SK-N-SH (cell line): ENCODE measurements at regions of chr18 and their contacts with region 1.

Region 1: DNA sequence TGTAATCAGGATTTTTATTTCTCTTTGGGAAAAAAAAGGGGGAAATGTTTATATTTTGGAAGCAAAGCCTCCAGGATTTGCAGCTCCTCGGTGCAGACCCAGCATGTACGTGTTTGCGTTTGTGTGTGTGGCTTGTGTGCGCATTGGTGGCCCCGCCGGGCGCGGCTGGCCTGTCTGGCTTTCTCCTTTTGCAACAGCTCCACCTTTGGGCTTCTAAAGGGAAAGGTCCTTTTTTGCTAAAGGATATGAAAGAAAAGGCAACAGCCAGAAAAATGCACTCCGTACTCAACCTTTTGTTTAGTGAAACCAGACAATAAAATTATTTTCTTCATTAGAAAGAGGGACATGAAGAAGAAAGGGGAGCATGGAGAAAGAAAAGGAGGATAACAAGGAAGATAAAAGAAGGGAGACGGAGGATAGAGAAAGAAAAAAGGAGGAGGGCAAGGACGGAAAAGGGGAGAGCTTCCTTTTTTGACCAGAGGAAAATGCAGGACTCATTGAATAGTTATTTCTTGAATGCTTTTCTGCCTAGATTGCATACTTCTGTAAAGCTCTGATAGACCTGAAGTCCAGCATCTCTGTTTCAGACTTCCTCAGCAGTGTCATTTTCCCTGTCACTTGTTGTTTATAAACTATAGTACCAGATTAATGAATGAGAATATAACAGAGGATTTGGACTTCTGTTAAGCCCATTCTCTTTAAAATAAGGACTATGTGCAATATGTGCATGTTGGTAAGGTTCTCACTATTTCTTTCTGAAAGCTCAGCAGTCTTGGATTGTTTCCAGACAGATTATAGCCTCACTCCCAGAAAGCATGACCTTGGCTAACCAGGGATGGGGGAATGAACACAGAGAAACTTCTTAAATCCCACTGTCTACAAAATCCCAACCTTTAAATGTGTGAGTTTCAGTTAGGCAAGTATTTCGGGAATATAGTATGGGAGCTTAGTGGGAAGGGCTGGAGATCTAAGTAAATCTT is 563.1 kb upstream of the PIK3C3 start:
- DNase-seq: peak; percentile 72
- H3K4me3 ChIP-seq: peak overlapping the region; percentile 41 to 53; a peak in 3 of 4 replicates
- H3K27ac ChIP-seq: peak overlapping the region in 1 of 2 experiments; percentile 63; a peak in 1 of 4 replicates
- H3K4me1 ChIP-seq: peaks cover 0 to 4% of the 10 kb centered on the region in 2 experiments; a peak in 2 of 4 replicates
- H3K27me3 ChIP-seq: no peaks in the 10 kb centered on the region
- CTCF ChIP-seq: peak; percentile 86
- EP300 ChIP-seq: peak in 1 of 2 experiments; percentile 33; a peak in 1 of 4 replicates
- RAD21 ChIP-seq: peak; percentile 92

Region 2: DNA sequence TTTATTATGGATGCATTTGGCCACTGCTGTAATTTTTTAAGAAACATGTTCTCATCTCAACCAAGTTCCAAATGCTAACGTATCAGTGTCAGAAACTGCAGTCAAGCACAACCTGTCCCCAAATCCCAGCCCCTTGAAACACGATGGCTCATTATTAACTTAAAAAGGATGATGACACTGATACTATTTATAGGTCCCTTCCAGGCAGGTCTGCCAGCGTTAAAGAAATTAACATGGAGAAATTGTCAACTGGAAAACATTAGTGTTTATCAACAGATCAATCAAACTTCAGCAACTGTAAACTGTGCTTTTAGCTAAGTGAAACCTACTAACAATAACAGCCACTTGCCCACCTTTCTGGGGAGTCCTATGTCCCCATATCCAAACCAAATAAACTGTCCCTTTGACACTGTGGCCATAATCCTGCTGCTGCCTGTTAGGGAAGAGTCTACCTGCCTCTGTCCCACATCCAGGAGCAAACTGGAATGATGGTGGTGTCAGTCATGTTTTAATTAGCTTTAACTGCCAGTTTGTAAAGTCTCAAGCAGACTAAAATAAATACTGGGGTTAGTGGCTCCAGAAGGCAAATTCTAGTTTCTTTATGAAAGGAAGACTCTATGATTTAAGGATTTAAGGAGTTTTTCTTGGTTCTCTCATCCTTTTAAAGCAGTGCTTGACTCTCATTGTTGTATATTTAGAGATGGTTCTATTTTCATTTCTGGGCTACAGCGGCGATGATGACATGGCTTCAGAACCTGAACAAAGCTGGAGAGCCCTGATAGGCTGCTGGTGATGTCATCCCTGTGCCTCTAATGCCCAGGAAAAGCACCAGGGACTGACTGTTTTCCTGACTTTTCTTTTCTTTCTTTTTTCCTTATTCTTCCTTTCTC is 20.5 kb before region 1 on chr18:
- CTCF ChIA-PET with region 1: interaction called, 11 read pairs
- POLR2A ChIA-PET with region 1: no interaction called
- DNase-seq: peak; percentile 15
- H3K4me3 ChIP-seq: no peak overlapping the region; a peak in 2 of 4 replicates
- H3K27ac ChIP-seq: peak overlapping the region in 1 of 2 experiments; percentile 98; a peak in 2 of 4 replicates
- H3K4me1 ChIP-seq: peaks cover 0 to 18% of the 10 kb centered on the region in 2 experiments; a peak in 2 of 4 replicates
- H3K27me3 ChIP-seq: no peaks in the 10 kb centered on the region
- CTCF ChIP-seq: no peak
- EP300 ChIP-seq: peak in 1 of 2 experiments; percentile 92; a peak in 2 of 4 replicates
- RAD21 ChIP-seq: no peak; the same call in 1 of the 2 replicates

Region 3: DNA sequence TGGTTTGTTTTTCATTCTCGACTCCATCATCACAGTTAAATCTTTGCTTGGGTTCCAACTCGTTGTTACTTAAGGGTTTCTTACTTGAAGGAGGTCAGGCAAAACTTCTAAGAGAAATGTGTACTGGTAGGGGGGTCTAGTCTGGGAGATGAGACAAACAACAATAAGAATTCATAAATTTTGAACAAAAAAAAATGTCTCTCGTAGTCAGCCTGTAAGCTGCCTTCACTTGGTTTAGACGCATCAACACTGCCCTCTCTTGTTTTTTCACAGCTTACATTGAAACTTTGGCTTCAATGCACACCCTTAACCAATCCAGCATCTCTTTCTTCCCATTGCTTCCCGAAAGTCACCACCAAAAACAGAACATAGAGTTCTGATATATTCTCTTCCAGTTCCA is 13.3 kb before region 1 on chr18:
- CTCF ChIA-PET with region 1: interaction called, 14 read pairs
- POLR2A ChIA-PET with region 1: no interaction called
- DNase-seq: peak; percentile 17
- H3K4me3 ChIP-seq: no peak overlapping the region
- H3K27ac ChIP-seq: no peak overlapping the region
- H3K4me1 ChIP-seq: no peaks in the 10 kb centered on the region; a peak in 1 of 4 replicates
- H3K27me3 ChIP-seq: no peaks in the 10 kb centered on the region
- CTCF ChIP-seq: peak; percentile 59
- EP300 ChIP-seq: no peak
- RAD21 ChIP-seq: peak; percentile 79

Region 4: DNA sequence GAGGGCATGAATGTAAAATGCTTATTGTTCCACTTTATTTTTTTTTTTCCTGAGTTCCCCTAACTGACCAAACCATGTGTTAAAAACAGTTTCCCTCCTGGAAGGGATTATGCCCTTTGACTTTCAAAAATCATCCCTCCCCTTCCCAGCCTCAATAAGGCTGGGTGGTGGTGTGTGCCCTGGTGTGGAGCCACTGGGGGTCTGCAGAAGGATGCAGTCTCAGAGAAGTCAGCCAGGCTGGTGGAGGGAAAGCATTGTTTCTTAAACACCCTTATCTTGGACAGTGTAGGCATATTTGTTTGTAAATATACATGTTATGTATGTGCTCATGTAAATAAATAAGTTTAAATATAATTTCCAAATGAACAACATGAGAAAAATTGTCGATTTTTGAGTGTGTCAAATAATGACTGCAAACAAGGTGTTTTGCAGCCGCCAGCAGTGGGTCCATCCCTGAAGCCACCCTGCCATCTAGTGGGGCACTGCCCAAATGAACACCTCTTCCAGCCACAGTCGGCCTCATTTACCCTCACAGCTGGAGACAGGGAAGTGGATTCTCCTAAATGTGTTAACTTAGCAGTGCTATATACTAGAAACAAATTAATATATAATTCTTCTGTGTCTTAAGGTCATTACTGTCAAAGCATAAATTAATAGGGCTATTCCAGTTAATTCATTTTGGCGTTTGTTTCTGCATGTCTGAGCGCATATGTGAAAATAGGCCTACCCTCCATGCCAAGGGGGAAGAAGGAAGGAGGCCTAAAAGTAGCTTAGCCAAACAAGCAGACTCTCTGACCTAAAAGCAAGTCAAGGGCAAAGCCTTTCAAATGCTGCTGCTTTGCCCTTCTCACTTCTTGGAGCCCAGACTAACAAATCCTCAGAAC is 353.5 kb after region 1 on chr18:
- CTCF ChIA-PET with region 1: interaction called, 18 read pairs
- POLR2A ChIA-PET with region 1: no interaction called
- DNase-seq: peak; percentile 71
- H3K4me3 ChIP-seq: peak overlapping the region in 1 of 2 experiments; percentile 40; a peak in 1 of 4 replicates
- H3K27ac ChIP-seq: peak overlapping the region in 1 of 2 experiments; percentile 69; a peak in 2 of 4 replicates
- H3K4me1 ChIP-seq: peaks cover 0 to 7% of the 10 kb centered on the region in 2 experiments; a peak in 2 of 4 replicates
- H3K27me3 ChIP-seq: no peaks in the 10 kb centered on the region
- CTCF ChIP-seq: peak; percentile 84
- EP300 ChIP-seq: no peak
- RAD21 ChIP-seq: peak; percentile 98